HEK293 (cell line): ENCODE measurements at regions of chr6 and their contacts with region 1.

Region 1: GRCh38 chr6:10237284-10238043 is 177.4 kb downstream of the TFAP2A start:
- H3K4me3 ChIP-seq: no peak overlapping the region
- H3K27ac ChIP-seq: no peak overlapping the region
- H3K4me1 ChIP-seq: no peaks in the 10 kb centered on the region
- CTCF ChIP-seq: no peak

Region 2: DNA sequence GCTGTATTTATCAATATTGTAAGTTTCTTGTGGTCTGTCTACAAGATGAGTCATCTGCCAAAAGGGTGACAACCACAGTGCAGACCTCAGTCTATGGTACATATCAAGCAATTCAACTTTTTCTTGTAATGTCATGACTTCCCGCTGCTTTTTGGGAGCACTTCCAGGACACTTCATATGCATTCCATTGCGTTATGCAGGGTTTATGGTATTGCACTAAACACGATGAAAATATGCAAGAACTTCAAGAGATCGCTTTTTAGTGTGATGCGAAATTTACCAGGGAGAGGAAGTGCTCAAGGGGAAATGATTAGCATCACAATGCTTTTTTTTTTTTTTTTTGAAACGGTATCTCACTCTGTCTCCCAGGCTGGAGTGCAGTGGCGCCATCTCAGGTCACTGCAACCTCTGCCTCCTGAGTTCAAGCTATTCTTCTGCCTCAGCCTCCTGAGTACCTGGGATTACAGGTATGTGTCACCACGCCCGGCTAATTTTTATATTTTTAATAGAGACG is 11.0 kb after region 1 on chr6:
- CTCF ChIA-PET with region 1: interaction called, 13 read pairs
- POLR2A ChIA-PET with region 1: no interaction called
- H3K4me3 ChIP-seq: no peak overlapping the region
- H3K27ac ChIP-seq: no peak overlapping the region
- H3K4me1 ChIP-seq: no peaks in the 10 kb centered on the region
- CTCF ChIP-seq: no peak; the same call in 1 of the 2 replicates

Region 3: DNA sequence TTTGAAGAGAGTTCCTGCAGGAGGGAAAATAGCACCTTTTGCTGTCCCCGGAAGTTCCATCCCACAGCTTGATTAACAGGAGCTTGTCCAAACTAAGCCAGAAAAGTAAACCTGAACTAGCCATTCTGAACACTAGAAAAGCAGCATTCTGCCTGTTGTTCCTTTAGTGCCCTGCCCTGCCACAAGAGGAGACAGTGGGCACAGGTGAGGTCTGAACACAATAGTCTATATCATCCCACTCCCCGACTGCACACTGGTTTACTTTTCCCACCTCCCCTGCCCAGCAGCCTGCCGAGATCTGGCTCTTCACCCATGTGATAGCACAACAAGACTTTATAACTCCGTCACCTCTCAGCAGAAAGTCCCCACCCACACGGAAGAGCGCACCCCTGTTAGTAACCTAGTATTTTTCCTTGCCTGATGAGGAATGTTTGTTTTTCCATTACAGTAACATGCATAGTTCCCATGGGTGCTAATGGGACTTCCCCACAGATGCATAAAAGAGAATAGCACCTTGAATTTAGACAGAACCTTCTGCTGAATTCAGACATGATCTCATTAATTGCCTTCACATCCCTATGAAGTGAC is 117.7 kb after region 1 on chr6:
- CTCF ChIA-PET with region 1: no interaction called
- POLR2A ChIA-PET with region 1: no interaction called
- H3K4me3 ChIP-seq: no peak overlapping the region
- H3K27ac ChIP-seq: no peak overlapping the region
- H3K4me1 ChIP-seq: no peaks in the 10 kb centered on the region
- CTCF ChIP-seq: no peak